Sigmoid colon (tissue), 7 donors: ENCODE measurements at regions of chr17 and their contacts with region 1.

Region 1: DNA sequence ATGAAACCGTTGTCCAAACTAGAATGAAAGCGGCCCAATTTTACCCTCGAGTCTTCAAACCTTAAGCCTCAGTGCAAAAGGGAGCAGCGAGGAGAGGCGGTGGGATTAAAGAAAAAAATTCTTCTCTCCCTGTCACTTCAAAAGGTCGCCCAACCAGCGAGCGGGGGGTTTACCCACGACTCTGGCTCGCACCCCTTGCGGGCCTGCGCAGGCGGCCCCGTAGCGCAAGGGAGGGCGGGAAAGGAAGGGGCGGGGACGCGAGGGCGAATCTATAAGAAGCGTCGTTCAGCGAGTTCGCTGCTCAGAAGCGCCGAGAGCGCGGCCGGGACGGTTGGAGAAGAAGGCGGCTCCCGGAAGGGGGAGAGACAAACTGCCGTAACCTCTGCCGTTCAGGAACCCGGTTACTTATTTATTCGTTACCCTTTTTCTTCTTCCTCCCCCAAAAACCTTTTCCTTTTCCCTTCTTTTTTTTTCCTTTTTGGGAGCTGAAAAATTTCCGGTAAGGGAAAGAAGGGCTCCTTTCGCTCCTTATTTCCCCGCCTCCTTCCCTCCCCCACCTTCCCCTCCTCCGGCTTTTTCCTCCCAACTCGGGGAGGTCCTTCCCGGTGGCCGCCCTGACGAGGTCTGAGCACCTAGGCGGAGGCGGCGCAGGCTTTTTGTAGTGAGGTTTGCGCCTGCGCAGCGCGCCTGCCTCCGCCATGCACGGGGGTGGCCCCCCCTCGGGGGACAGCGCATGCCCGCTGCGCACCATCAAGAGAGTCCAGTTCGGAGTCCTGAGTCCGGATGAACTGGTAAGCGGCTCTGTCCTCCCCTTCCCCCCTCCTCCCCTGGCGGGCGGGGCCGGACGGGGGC is at the start of gene POLR2A:
- DNase-seq: peak; percentile 100
- H3K4me3 ChIP-seq: peak within 1 kb of the TSS; percentile 63 to 72 (median 64)
- H3K27ac ChIP-seq: peak within 1 kb of the TSS; percentile 94 to 100 (median 97)
- H3K4me1 ChIP-seq: peaks cover 0 to 74% (median 61%) of the 10 kb centered on the region in 4 donors
- H3K27me3 ChIP-seq: no peaks in the 10 kb centered on the region
- CTCF ChIP-seq: no peak
- EP300 ChIP-seq: peak in 2 of 4 donors; percentile 29 to 70
- POLR2A ChIP-seq: peak; percentile 100
- total RNA-seq, gene POLR2A: 30.1 to 43.2 (median 36.5) TPM

Region 2: DNA sequence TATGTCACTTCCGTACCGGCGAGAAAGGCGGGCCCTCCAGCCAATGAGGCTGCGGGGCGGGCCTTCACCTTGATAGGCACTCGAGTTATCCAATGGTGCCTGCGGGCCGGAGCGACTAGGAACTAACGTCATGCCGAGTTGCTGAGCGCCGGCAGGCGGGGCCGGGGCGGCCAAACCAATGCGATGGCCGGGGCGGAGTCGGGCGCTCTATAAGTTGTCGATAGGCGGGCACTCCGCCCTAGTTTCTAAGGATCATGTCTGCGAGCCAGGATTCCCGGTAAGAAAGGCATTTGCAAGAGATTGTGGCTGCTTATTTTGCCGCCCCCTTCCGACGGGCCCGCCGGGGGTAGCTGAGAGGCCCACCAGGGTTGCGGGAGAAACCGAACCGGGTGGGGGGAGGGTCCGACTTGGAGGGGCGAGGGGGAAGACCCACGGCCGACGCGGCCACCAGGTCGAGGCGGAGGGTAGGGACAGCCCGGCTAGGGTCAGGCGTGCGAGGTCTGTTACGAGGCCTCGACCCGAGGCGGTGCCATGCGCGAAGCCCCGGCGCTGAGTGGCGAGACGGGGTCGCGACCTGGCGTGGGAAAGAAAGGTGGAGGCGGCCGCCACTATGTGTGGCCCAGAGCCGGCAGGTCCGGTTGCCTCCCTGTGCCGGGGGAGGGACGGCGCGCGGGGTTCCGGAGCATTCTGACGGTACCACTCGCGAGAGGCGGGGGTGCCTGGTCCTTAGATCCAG is 88.5 kb after region 1 on chr17:
- intact Hi-C with region 1: loop called (anchors 2 kb)
- DNase-seq: peak; percentile 100
- H3K4me3 ChIP-seq: peak overlapping the region; percentile 80 to 100 (median 89)
- H3K27ac ChIP-seq: peak overlapping the region; percentile 97 to 100 (median 98)
- H3K4me1 ChIP-seq: peaks cover 0 to 36% (median 34%) of the 10 kb centered on the region in 4 donors
- H3K27me3 ChIP-seq: no peaks in the 10 kb centered on the region
- CTCF ChIP-seq: no peak
- EP300 ChIP-seq: no peak
- POLR2A ChIP-seq: peak; percentile 98 to 99

Region 3: DNA sequence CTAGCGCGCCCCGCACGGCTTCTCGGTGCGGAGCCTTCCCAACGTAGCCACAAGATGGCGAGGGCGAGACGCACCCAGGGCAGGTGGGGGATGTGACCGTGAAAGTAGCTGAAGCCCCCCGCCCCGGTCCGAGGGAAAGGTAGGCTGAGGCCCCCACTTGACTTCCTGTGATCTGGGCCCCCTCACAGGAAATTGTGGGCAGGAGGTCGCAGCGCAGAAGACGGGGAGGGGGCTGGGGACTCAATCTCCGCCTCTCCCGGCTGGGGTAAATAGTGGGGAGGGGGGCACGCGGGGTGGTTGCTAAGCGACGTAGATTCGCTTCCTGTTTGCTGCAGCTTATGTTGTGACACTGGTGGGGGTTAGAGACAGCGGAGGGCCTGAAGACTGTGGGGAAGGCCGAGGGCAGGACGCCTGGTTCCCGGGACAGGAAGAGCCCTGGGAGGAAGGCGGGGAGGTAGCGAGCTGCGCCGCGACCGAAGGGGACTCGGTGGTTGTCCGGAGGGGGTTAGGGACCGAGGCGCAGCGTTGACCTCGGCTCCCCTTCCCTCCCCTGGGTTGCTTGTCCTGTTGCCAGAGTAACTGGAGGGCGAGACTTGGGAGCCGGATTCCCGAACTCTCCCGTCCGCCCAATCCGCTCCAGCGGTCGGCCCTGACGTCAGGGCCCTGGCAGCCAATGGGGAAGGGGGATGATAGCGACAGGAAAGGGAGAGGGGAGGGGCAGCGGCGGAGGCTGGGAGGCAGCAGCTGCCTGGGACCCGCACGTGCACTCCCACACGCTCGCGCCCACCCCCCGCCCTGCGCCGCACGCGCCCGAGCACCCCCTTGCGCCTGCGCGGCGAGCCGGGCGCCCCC is 350.9 kb after region 1 on chr17:
- intact Hi-C with region 1: loop called (anchors 10 kb)
- DNase-seq: peak; percentile 99
- H3K4me3 ChIP-seq: peak overlapping the region; percentile 75 to 96 (median 82)
- H3K27ac ChIP-seq: peak overlapping the region; percentile 95 to 100 (median 97)
- H3K4me1 ChIP-seq: peaks cover 0 to 53% (median 44%) of the 10 kb centered on the region in 4 donors
- H3K27me3 ChIP-seq: no peaks in the 10 kb centered on the region
- CTCF ChIP-seq: peak; percentile 88 to 94 (median 90)
- EP300 ChIP-seq: peak in 1 of 4 donors; percentile 65
- POLR2A ChIP-seq: peak; percentile 86